HepG2 (cell line): ENCODE measurements at regions of chr17 and their contacts with region 1.

Region 1: GRCh38 chr17:77101521-77102410 is 39.0 kb upstream of the SEC14L1 start:
- DNase-seq: peak; percentile 88
- ATAC-seq: peak; percentile 89
- H3K4me3 ChIP-seq: peak overlapping the region in 2 of 3 experiments; percentile 19 to 44; a peak in 1 of 6 replicates
- H3K27ac ChIP-seq: peak overlapping the region; percentile 68
- H3K4me1 ChIP-seq: peaks cover 84% of the 10 kb centered on the region
- H3K27me3 ChIP-seq: no peaks in the 10 kb centered on the region
- CTCF ChIP-seq: no peak
- EP300 ChIP-seq: peak in 1 of 2 experiments; percentile 76; a peak in 2 of 4 replicates
- POLR2A ChIP-seq: peak in 1 of 2 experiments; percentile 48; a peak in 1 of 4 replicates
- RAD21 ChIP-seq: no peak

Region 2: GRCh38 chr17:77118251-77118928 is 16.6 kb after region 1 on chr17:
- CTCF ChIA-PET with region 1: no interaction called
- POLR2A ChIA-PET with region 1: interaction called, 24 read pairs
- in situ Hi-C with region 1: no loop called
- intact Hi-C with region 1: no loop called
- DNase-seq: no peak
- ATAC-seq: no peak
- H3K4me3 ChIP-seq: no peak overlapping the region
- H3K27ac ChIP-seq: no peak overlapping the region
- H3K4me1 ChIP-seq: peaks cover 88% of the 10 kb centered on the region
- H3K27me3 ChIP-seq: no peaks in the 10 kb centered on the region
- CTCF ChIP-seq: no peak
- EP300 ChIP-seq: no peak
- POLR2A ChIP-seq: no peak
- RAD21 ChIP-seq: no peak

Region 3: GRCh38 chr17:77124192-77124889 is 22.6 kb after region 1 on chr17:
- CTCF ChIA-PET with region 1: no interaction called
- POLR2A ChIA-PET with region 1: interaction called, 24 read pairs
- in situ Hi-C with region 1: no loop called
- intact Hi-C with region 1: no loop called
- DNase-seq: no peak
- ATAC-seq: no peak
- H3K4me3 ChIP-seq: no peak overlapping the region
- H3K27ac ChIP-seq: no peak overlapping the region
- H3K4me1 ChIP-seq: peaks cover 59% of the 10 kb centered on the region
- H3K27me3 ChIP-seq: no peaks in the 10 kb centered on the region
- CTCF ChIP-seq: no peak
- EP300 ChIP-seq: no peak
- POLR2A ChIP-seq: no peak
- RAD21 ChIP-seq: no peak